MCF 10A (cell line): ENCODE measurements at regions of chr3 and their contacts with region 1.

Region 1: DNA sequence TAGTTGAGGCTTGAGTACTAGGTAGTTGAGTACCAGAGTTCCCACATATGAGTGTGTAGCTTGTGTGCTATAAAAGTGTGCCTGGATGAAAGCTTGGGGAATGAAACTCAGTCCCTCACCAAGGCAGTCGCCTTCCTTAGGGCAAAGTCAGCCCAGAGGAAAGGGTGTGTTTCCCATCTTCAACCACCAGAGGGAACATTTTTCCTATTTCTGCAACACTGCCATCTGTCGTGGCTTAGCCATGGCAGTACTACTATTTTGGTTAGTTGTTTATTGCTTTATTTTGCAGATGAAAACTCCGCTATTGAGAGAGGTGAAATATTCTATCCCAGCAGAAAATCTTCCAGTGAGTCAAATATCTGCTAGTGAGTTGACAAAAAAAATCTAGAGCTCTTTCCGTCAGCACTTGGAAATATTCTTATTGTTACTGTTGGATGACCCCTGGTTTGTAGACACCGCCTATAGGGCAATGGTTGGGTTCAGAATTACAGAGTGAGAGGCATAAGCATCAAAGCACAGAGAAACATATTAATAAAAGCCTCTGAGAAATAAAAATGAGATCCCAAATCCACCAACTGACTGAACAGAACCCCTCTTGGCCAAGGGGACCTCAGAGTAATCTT is 239.9 kb downstream of the CPNE4 start:
- DNase-seq: peak; percentile 57
- H3K4me3 Mint-ChIP-seq: no peak overlapping the region
- H3K27ac Mint-ChIP-seq: no peak overlapping the region
- H3K4me1 Mint-ChIP-seq: no peaks in the 10 kb centered on the region
- H3K27me3 Mint-ChIP-seq: peaks cover 14% of the 10 kb centered on the region
- CTCF ChIP-seq: peak; percentile 77

Region 2: GRCh38 chr3:131033480-131034080 is 761.3 kb before region 1 on chr3:
- CTCF ChIA-PET with region 1: interaction called, 15 read pairs
- POLR2A ChIA-PET with region 1: no interaction called
- intact Hi-C with region 1: loop called (anchors 2 kb)
- DNase-seq: peak; percentile 56
- H3K4me3 Mint-ChIP-seq: no peak overlapping the region
- H3K27ac Mint-ChIP-seq: no peak overlapping the region
- H3K4me1 Mint-ChIP-seq: peaks cover 7% of the 10 kb centered on the region
- H3K27me3 Mint-ChIP-seq: no peaks in the 10 kb centered on the region
- CTCF ChIP-seq: peak; percentile 67

Region 3: DNA sequence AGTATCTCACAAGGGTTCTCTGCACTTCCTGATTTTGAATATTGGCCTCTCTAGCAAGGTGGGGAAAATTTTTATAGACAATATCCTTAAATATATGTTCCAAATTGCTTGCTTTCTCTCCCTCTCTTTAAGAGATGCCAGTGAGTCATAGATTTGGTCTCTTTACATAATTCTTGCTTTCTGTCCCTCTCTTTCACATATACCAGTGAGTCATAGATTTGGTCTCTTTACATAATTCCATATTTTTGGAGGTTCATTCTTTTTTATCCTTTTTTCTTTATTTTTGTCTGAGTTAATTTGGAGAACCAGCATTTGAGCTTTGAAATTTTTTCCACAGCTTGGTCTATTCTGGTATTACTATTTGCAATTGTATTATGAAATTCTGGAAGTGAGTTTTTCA is 491.0 kb before region 1 on chr3:
- CTCF ChIA-PET with region 1: no interaction called
- POLR2A ChIA-PET with region 1: no interaction called
- intact Hi-C with region 1: no loop called
- DNase-seq: peak; percentile 29
- H3K4me3 Mint-ChIP-seq: no peak overlapping the region
- H3K27ac Mint-ChIP-seq: no peak overlapping the region
- H3K4me1 Mint-ChIP-seq: no peaks in the 10 kb centered on the region
- H3K27me3 Mint-ChIP-seq: no peaks in the 10 kb centered on the region
- CTCF ChIP-seq: no peak

Region 4: GRCh38 chr3:131772269-131773026 is 22.4 kb before region 1 on chr3:
- CTCF ChIA-PET with region 1: interaction called, 22 read pairs
- POLR2A ChIA-PET with region 1: no interaction called
- intact Hi-C with region 1: no loop called
- DNase-seq: no peak
- H3K4me3 Mint-ChIP-seq: no peak overlapping the region
- H3K27ac Mint-ChIP-seq: no peak overlapping the region
- H3K4me1 Mint-ChIP-seq: no peaks in the 10 kb centered on the region
- H3K27me3 Mint-ChIP-seq: no peaks in the 10 kb centered on the region
- CTCF ChIP-seq: no peak

Region 5: DNA sequence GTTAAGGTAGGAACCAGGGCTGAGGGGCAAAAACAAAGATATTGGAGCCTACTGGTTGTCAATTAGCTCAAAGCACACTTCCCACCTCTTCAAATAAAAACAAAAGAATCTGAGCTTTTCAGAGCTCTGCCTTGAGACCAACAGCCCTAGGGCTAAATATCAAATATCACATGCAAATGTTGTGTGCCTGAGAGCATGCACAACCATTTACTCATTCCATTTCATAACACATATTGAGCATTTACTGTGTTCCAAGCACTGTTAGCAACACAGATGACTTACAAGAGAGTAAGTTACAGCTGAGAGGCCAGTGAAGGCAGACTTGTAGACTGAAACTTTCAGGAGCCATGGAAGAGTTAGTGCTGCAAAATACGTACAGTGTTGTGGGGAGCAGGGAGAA is 17.5 kb after region 1 on chr3:
- CTCF ChIA-PET with region 1: interaction called, 16 read pairs
- POLR2A ChIA-PET with region 1: no interaction called
- intact Hi-C with region 1: no loop called
- DNase-seq: peak; percentile 31
- H3K4me3 Mint-ChIP-seq: no peak overlapping the region
- H3K27ac Mint-ChIP-seq: no peak overlapping the region
- H3K4me1 Mint-ChIP-seq: peaks cover 6% of the 10 kb centered on the region
- H3K27me3 Mint-ChIP-seq: peaks cover 54% of the 10 kb centered on the region
- CTCF ChIP-seq: no peak

Region 6: GRCh38 chr3:132016061-132017041 is 221.5 kb after region 1 on chr3:
- CTCF ChIA-PET with region 1: interaction called, 21 read pairs
- POLR2A ChIA-PET with region 1: no interaction called
- intact Hi-C with region 1: no loop called
- DNase-seq: peak; percentile 62
- H3K4me3 Mint-ChIP-seq: no peak overlapping the region
- H3K27ac Mint-ChIP-seq: no peak overlapping the region
- H3K4me1 Mint-ChIP-seq: peaks cover 13% of the 10 kb centered on the region
- H3K27me3 Mint-ChIP-seq: peaks cover 63% of the 10 kb centered on the region
- CTCF ChIP-seq: no peak

Region 7: DNA sequence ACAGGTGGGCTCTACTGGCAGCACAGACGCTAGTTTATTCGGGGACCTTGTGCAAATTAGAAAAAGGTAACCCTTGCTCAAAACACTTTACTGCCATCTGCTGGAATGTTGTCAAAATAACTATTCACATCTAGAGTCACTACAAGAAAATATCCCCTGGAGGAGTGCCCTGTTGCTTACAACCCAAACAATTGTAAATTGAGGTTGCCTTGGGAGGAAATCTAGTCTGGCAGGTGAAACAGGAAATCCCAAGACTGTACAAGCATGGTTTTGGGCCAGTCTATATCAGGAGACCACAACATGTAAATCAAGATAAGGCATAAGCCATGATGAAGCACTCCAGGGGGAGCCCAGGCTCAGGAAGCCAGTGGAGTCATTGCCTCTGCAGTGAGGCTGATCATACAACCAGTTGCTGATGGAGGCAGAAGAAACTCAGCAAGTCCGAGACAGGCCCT is 385.5 kb after region 1 on chr3:
- CTCF ChIA-PET with region 1: interaction called, 32 read pairs
- POLR2A ChIA-PET with region 1: interaction called, 4 read pairs
- intact Hi-C with region 1: loop called (anchors 10 kb)
- DNase-seq: peak; percentile 72
- H3K4me3 Mint-ChIP-seq: no peak overlapping the region
- H3K27ac Mint-ChIP-seq: no peak overlapping the region
- H3K4me1 Mint-ChIP-seq: no peaks in the 10 kb centered on the region
- H3K27me3 Mint-ChIP-seq: no peaks in the 10 kb centered on the region
- CTCF ChIP-seq: peak; percentile 54